ENCODE measurements at regions of chr10 and their contacts with region 1.

Region 1: DNA sequence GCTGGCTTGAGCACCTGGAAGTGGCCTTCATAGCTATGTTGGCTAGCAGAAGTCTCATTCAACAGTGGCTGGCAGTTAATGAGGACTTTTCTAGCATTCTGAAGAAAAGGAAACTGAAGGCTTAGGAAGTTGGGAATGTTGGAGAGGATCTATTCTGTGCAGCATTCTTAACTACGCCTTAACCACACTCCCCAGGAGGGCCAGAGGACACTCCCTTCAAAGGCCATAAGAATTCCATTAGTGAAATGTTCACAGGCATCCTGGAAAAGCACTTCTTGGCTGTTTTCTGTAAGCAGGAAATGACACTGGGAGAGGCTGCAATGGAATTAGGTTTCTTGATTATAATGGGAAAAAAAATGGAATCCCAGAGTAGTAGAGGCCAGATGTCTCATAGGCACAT is 188.9 kb downstream of the ARHGAP12 start:
- DNase-seq: no peak
- ATAC-seq: no peak
- H3K4me3 ChIP-seq: no peak overlapping the region
- H3K27ac ChIP-seq: no peak overlapping the region
- H3K4me1 ChIP-seq: no peaks in the 10 kb centered on the region
- H3K27me3 ChIP-seq: no peaks in the 10 kb centered on the region
- CTCF ChIP-seq: no peak

Region 2: GRCh38 chr10:31586723-31587638 is 152.7 kb before region 1 on chr10:
- intact Hi-C with region 1: no loop called
- DNase-seq: no peak
- ATAC-seq: peak; percentile 38
- H3K4me3 ChIP-seq: no peak overlapping the region
- H3K27ac ChIP-seq: peak overlapping the region in 1 of 2 donors; percentile 18
- H3K4me1 ChIP-seq: peaks cover 0 to 37% of the 10 kb centered on the region in 2 donors
- H3K27me3 ChIP-seq: no peaks in the 10 kb centered on the region
- CTCF ChIP-seq: no peak

Region 3: DNA sequence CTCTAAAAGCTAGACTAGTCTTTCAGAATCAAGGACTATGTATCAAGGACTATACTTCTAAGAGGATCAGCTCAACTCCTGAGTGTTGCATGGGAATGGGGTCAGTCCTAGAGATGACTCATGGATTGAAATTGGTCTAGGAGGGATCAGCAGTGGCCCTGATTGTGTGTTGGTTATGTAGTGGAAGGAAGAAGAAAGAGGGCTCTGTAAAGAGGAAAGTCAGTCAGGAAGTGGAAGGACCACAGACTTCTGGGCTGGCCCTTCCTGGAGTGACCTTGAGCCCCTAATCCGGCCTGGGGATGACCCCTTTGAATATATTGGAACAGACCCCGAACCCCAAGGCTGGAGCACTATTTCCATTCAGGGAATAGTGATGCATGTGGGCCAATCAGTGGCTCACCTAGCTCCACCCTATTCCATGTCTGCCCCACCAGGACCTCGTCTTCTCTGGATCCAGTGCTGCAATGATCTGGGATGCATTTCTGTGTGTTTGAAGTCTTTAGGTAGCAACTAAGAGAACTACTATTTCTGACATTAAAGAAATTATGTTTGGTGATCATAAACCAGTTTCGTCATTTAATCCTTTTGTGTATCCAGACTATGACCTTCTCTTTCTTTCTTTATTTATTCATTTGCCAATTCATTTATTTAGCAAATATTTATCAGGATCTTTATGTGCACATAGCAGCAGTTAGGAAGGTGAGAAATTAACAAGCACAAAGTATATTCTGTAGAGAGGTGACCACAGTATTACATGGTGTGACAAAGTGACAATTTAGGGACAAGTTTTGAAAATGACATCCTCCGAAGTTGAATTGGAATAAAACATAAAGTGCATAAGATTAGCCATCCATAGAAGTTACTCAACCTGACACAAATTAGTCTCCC is 365.2 kb after region 1 on chr10:
- intact Hi-C with region 1: loop called in 1 of 2 experiments (anchors 10 kb)
- DNase-seq: no peak
- ATAC-seq: no peak
- H3K4me3 ChIP-seq: no peak overlapping the region
- H3K27ac ChIP-seq: no peak overlapping the region
- H3K4me1 ChIP-seq: no peaks in the 10 kb centered on the region
- H3K27me3 ChIP-seq: no peaks in the 10 kb centered on the region
- CTCF ChIP-seq: no peak